CD4-positive, alpha-beta memory T cell (primary cell): ENCODE measurements at regions of chr17 and their contacts with region 1.

Region 1: DNA sequence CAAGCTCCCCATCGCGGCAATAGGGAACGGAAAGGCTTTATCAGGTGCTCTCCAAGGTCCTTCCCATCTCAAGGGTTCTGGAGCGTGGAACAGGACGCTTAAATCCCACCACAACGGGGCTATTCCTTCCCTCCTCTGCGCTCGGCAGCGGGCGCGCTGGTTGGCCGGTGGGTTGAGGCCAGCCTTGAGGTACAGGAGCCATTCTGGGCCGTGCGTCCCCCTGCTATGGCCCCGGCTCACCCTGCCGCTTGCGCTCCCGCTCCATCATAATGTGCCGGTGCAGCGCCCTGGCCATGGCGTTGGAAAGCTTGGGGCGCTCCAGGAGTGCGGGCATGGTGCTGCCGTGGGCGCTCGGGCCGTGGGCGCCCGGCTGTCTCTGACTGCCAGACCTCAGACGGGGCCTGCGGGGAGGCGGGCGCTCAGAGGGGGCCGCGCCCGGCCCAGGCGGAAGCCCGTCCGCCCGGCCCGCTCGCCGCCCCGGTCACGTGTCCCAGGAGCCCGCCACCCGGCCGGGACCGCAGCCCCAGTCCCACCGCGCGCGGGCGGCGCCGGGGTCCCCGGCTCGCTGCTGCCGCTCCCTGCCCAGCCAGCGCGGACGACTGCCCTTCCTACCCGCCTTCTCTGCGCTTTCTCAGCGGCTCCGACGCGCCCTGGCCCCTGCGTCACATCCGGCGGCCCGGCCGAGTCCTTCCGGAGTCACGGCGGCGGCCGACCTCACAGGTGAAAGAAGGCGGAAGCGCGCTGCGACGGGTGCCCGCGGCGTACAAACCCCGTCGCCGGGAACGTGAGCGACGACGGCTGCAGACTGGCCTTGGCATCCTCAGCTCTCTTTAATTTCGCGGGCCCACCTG is at the start of gene GPS2:
- DNase-seq: peak; percentile 92 to 94 (median 93)
- H3K4me3 ChIP-seq: peak within 1 kb of the TSS; percentile 68 to 76
- H3K4me3 Mint-ChIP-seq: peak within 1 kb of the TSS; percentile 83 to 97 (median 92)
- H3K27ac ChIP-seq: peak within 1 kb of the TSS; percentile 83
- H3K27ac Mint-ChIP-seq: peak within 1 kb of the TSS; percentile 92 to 98 (median 96)
- H3K4me1 ChIP-seq: peaks cover 50% of the 10 kb centered on the region
- H3K4me1 Mint-ChIP-seq: peaks cover 29 to 64% (median 44%) of the 10 kb centered on the region in 4 donors
- H3K27me3 ChIP-seq: no peaks in the 10 kb centered on the region
- H3K27me3 Mint-ChIP-seq: no peaks in the 10 kb centered on the region
- total RNA-seq, gene GPS2: 127 to 132 TPM

Region 2: GRCh38 chr17:7248796-7249195 is 66.1 kb before region 1 on chr17:
- CTCF ChIA-PET with region 1: no interaction called
- POLR2A ChIA-PET with region 1: no interaction called
- intact Hi-C with region 1: no loop called
- DNase-seq: no peak
- H3K4me3 ChIP-seq: no peak overlapping the region
- H3K4me3 Mint-ChIP-seq: peak overlapping the region in 5 of 8 donors; percentile 21 to 91 (median 74)
- H3K27ac ChIP-seq: no peak overlapping the region
- H3K27ac Mint-ChIP-seq: peak overlapping the region in 6 of 7 donors; percentile 3 to 99 (median 53)
- H3K4me1 ChIP-seq: peaks cover 37% of the 10 kb centered on the region
- H3K4me1 Mint-ChIP-seq: peaks cover 28 to 57% (median 37%) of the 10 kb centered on the region in 4 donors
- H3K27me3 ChIP-seq: no peaks in the 10 kb centered on the region
- H3K27me3 Mint-ChIP-seq: no peaks in the 10 kb centered on the region

Region 3: DNA sequence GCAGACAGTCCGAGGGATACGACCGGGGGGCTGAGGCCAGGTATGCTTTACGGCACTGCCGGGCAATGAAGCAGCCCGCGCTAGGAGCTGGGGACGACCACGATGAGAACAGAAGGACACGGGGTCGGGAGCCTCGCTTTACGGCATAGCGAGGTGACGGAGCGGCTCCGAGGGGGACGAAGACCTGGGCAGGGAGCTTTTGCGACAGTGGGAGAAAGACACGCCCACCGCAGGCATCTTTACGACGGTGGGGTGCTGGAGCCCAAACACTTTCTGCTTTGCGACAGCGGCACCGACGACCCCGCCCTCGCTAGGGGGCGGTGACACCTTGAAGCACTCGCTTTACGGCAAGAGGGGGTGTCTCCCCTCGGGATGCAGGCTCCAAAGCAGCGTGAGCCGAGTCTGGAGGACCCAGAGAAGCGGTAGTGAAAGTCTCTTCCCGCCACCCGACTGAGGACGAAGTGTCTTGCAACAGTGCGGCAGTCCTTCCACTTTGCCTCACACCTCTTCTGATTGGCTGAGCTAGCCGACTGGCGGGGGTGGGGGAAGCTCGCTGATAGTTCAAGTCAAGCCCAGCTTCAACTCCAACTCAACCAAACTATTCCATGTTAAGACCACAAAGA is 14.5 kb after region 1 on chr17:
- CTCF ChIA-PET with region 1: interaction called, 6 read pairs
- POLR2A ChIA-PET with region 1: interaction called, 187 read pairs
- intact Hi-C with region 1: loop called (anchors 1 kb)
- DNase-seq: peak; percentile 97 to 99 (median 97)
- H3K4me3 ChIP-seq: peak overlapping the region; percentile 94 to 99
- H3K4me3 Mint-ChIP-seq: peak overlapping the region; percentile 97 to 98 (median 98)
- H3K27ac ChIP-seq: peak overlapping the region; percentile 82
- H3K27ac Mint-ChIP-seq: peak overlapping the region; percentile 93 to 99 (median 98)
- H3K4me1 ChIP-seq: peaks cover 49% of the 10 kb centered on the region
- H3K4me1 Mint-ChIP-seq: peaks cover 32 to 58% (median 42%) of the 10 kb centered on the region in 4 donors
- H3K27me3 ChIP-seq: no peaks in the 10 kb centered on the region
- H3K27me3 Mint-ChIP-seq: no peaks in the 10 kb centered on the region

Region 4: GRCh38 chr17:7344399-7344798 is 29.5 kb after region 1 on chr17:
- CTCF ChIA-PET with region 1: interaction called, 8 read pairs
- POLR2A ChIA-PET with region 1: interaction called, 23 read pairs
- intact Hi-C with region 1: no loop called
- DNase-seq: no peak
- H3K4me3 ChIP-seq: no peak overlapping the region
- H3K4me3 Mint-ChIP-seq: no peak overlapping the region
- H3K27ac ChIP-seq: no peak overlapping the region
- H3K27ac Mint-ChIP-seq: peak overlapping the region in 4 of 7 donors; percentile 13 to 86 (median 62)
- H3K4me1 ChIP-seq: peaks cover 19% of the 10 kb centered on the region
- H3K4me1 Mint-ChIP-seq: peaks cover 16 to 39% (median 27%) of the 10 kb centered on the region in 4 donors
- H3K27me3 ChIP-seq: no peaks in the 10 kb centered on the region
- H3K27me3 Mint-ChIP-seq: no peaks in the 10 kb centered on the region

Region 5: GRCh38 chr17:7367083-7367482 is 52.1 kb after region 1 on chr17:
- CTCF ChIA-PET with region 1: no interaction called
- POLR2A ChIA-PET with region 1: no interaction called
- intact Hi-C with region 1: no loop called
- DNase-seq: no peak
- H3K4me3 ChIP-seq: no peak overlapping the region
- H3K4me3 Mint-ChIP-seq: no peak overlapping the region
- H3K27ac ChIP-seq: no peak overlapping the region
- H3K27ac Mint-ChIP-seq: no peak overlapping the region
- H3K4me1 ChIP-seq: no peaks in the 10 kb centered on the region
- H3K4me1 Mint-ChIP-seq: peaks cover 0 to 1% (median 0%) of the 10 kb centered on the region in 4 donors
- H3K27me3 ChIP-seq: no peaks in the 10 kb centered on the region
- H3K27me3 Mint-ChIP-seq: peaks cover 4 to 6% of the 10 kb centered on the region in 2 donors

Region 6: GRCh38 chr17:7394452-7395191 is 79.7 kb after region 1 on chr17 and contains the start of gene PLSCR3:
- CTCF ChIA-PET with region 1: no interaction called
- POLR2A ChIA-PET with region 1: no interaction called
- intact Hi-C with region 1: no loop called
- DNase-seq: peak; percentile 76 to 88 (median 83)
- H3K4me3 ChIP-seq: peak within 1 kb of the TSS; percentile 78 to 94
- H3K4me3 Mint-ChIP-seq: peak within 1 kb of the TSS; percentile 93 to 97 (median 96)
- H3K27ac ChIP-seq: peak within 1 kb of the TSS; percentile 91
- H3K27ac Mint-ChIP-seq: peak within 1 kb of the TSS; percentile 92 to 98 (median 94)
- H3K4me1 ChIP-seq: peaks cover 44% of the 10 kb centered on the region
- H3K4me1 Mint-ChIP-seq: peaks cover 13 to 44% (median 31%) of the 10 kb centered on the region in 4 donors
- H3K27me3 ChIP-seq: no peaks in the 10 kb centered on the region
- H3K27me3 Mint-ChIP-seq: no peaks in the 10 kb centered on the region
- total RNA-seq, gene PLSCR3: 90.3 to 91.9 TPM